ENCODE measurements at regions of chr9 and their contacts with region 1.

Region 1: GRCh38 chr9:71858812-71859211 is 52.2 kb downstream of the ABHD17B start:
- DNase-seq: no peak
- ATAC-seq: no peak
- H3K4me3 ChIP-seq: no peak overlapping the region
- H3K4me3 Mint-ChIP-seq: no peak overlapping the region
- H3K27ac ChIP-seq: no peak overlapping the region
- H3K27ac Mint-ChIP-seq: no peak overlapping the region
- H3K4me1 ChIP-seq: no peaks in the 10 kb centered on the region
- H3K4me1 Mint-ChIP-seq: no peaks in the 10 kb centered on the region
- H3K27me3 ChIP-seq: no peaks in the 10 kb centered on the region
- H3K27me3 Mint-ChIP-seq: no peaks in the 10 kb centered on the region
- CTCF ChIP-seq: no peak

Region 2: DNA sequence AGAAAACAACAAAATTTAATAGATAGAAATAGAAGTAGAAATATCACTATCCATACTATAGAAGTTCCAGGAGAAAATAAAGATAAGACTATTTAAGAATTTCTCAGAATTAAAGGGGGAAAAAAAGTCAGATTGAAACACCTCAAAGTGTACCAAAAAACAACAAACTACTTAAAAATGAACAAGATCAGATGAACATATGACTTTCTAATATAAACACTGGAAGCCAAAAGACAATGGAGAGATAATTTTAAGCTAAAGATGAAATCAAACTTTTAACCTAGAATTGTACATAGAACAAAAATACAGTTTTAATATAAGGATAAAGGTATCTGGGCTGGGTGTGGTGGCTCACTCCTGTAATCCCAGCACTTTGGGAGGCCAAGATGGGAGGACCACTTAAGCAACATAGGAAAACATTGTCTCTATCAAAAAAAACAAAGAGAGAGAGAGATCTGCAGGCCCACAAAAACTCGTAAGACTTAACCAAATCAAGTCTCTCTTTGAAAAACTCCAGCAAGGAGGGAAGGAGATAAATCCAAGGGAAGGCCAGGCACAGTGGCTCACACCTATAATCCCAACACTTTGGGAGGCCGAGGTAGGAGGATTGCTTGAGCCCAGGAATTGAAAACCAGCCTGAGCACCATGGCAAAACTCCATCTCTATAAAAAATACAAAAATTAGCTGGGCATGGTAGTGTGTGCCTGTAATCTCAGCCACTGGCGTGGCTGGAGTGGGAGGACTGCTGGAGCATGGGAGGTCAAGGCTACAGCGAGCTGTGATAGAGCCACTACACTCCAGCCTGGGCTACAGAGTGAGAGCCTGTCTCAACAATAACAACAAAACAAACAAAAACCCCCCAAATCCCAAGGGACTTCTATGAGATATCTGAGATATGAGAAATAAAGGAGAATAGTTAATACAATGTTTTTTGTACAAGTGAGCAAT is 19.8 kb after region 1 on chr9:
- CTCF ChIA-PET with region 1: no interaction called
- POLR2A ChIA-PET with region 1: no interaction called
- intact Hi-C with region 1: loop called in 1 of 2 experiments (anchors 2 kb)
- DNase-seq: no peak
- ATAC-seq: no peak
- H3K4me3 ChIP-seq: no peak overlapping the region
- H3K4me3 Mint-ChIP-seq: no peak overlapping the region
- H3K27ac ChIP-seq: no peak overlapping the region
- H3K27ac Mint-ChIP-seq: no peak overlapping the region
- H3K4me1 ChIP-seq: peaks cover 11% of the 10 kb centered on the region
- H3K4me1 Mint-ChIP-seq: peaks cover 30% of the 10 kb centered on the region
- H3K27me3 ChIP-seq: no peaks in the 10 kb centered on the region
- H3K27me3 Mint-ChIP-seq: no peaks in the 10 kb centered on the region
- CTCF ChIP-seq: no peak

Region 3: DNA sequence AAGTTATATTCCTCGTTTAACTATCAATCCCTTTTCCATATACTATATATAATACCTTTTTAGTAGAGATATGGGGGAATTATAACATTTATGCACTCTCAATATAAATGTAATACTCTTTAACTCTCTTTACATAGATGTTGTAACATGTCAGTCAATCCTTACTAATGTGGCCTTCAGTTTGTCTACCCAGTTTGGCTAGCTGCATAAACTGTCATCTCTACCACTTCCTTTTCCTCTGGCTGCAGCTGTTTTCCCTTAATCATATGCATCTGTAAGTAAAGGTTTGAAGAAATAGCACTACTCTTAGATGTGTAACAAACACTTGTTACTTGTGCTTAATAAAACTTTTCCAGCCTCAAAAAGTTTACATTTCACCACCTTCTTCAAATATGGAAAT is 38.8 kb after region 1 on chr9:
- CTCF ChIA-PET with region 1: no interaction called
- POLR2A ChIA-PET with region 1: no interaction called
- intact Hi-C with region 1: loop called in 1 of 2 experiments (anchors 5 kb)
- DNase-seq: peak in 3 of 9 experiments; percentile 9 to 71 (median 53)
- ATAC-seq: peak; percentile 78
- H3K4me3 ChIP-seq: no peak overlapping the region
- H3K4me3 Mint-ChIP-seq: peak overlapping the region; percentile 35
- H3K27ac ChIP-seq: peak overlapping the region in 1 of 2 experiments; percentile 69
- H3K27ac Mint-ChIP-seq: peak overlapping the region; percentile 19
- H3K4me1 ChIP-seq: peaks cover 54% of the 10 kb centered on the region
- H3K4me1 Mint-ChIP-seq: peaks cover 79% of the 10 kb centered on the region
- H3K27me3 ChIP-seq: no peaks in the 10 kb centered on the region
- H3K27me3 Mint-ChIP-seq: no peaks in the 10 kb centered on the region
- CTCF ChIP-seq: no peak

Measured in CD8-positive, alpha-beta T cell (primary cell).